Activated CD4-positive, alpha-beta T cell treated with anti-CD3 and anti-CD28 coated beads for 36 hours (primary cell): ENCODE measurements at regions of chr17 and their contacts with region 1.

Region 1: DNA sequence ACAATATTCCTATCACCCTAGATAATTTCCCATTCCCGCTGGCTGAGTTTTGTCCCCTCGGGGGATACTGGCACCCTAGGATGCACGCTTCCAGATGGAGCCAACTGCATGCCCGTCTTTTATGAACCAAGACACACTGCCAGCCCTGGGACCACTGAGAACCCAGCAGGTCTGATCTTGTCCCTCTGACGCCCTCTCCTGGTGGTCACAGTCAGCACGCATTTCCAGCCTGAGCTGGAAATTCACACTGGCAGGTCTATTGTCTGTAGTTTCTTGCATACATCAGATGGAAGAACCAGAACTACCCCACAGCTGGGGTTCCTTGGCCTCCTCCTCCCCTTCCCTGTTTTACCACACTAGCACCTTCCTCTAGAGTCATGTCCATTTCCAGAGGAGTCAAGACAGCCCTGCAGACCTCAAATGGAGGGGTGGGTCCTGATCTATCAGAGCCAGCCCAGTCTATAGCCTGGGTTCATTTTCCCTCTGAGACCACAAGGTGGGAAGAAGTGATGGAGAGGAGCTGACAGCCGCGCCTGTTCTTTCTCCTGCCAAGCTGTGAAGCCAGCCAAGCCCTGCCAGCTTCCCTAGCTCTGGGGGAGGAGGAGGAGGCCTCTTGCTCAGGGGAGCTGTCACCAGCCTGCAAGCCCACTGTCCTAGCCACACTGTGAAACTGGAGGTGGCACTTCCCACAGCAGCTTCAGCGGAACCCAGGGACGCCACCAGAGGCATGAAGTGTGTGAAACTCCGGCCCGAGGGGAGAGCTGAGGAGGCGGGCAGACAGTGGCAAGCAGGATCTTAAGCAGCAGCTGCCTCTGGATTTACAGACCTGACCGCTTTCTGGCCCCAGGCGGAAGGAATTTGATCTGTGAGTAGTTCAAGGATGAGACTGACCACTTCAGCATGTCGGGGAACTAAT is 29.3 kb downstream of the MXRA7 start:
- DNase-seq: peak; percentile 83
- ATAC-seq: peak; percentile 89
- H3K4me3 Mint-ChIP-seq: no peak overlapping the region
- H3K27ac Mint-ChIP-seq: no peak overlapping the region
- H3K4me1 Mint-ChIP-seq: peaks cover 1% of the 10 kb centered on the region
- H3K27me3 Mint-ChIP-seq: no peaks in the 10 kb centered on the region

Region 2: DNA sequence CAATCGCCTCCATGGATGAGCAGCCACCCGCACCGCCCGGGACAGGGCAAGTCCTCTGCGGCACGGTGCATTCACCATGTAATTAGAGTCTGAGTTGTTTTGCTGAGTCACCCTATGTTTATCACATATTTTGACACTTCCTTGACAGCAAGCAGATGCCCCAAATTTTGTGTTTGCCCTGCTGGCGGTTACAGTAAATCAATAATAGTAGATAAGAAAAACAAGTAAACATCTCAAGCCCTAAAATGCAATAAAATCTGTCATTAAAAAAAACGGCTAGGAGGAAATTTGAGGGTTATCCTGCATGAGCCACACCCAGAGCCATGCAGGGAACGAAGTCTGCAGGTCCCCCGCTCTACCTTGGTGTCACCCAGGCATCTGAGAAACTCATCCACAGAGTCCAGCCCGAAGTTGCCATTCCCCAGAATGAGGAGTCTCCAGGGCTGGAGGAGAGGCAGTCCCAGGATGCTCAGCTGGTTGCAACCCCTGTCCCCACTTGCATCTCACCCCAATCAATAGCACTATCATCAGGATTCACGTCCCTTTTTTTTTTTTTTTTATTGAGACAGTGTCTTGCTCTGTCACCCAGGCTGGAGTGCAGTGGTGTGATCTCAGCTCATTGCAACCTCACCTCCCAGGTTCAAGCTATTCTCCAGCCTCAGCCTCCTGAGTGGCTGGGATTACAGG is 21.4 kb before region 1 on chr17:
- CTCF ChIA-PET with region 1: interaction called, 11 read pairs
- POLR2A ChIA-PET with region 1: interaction called, 4 read pairs
- intact Hi-C with region 1: no loop called
- DNase-seq: no peak
- ATAC-seq: peak; percentile 68
- H3K4me3 Mint-ChIP-seq: no peak overlapping the region
- H3K27ac Mint-ChIP-seq: no peak overlapping the region
- H3K4me1 Mint-ChIP-seq: peaks cover 22% of the 10 kb centered on the region
- H3K27me3 Mint-ChIP-seq: peaks cover 2% of the 10 kb centered on the region

Region 3: GRCh38 chr17:76797241-76797840 is 115.9 kb after region 1 on chr17:
- CTCF ChIA-PET with region 1: no interaction called
- POLR2A ChIA-PET with region 1: no interaction called
- intact Hi-C with region 1: no loop called
- DNase-seq: no peak
- ATAC-seq: no peak
- H3K4me3 Mint-ChIP-seq: no peak overlapping the region
- H3K27ac Mint-ChIP-seq: no peak overlapping the region
- H3K4me1 Mint-ChIP-seq: no peaks in the 10 kb centered on the region
- H3K27me3 Mint-ChIP-seq: no peaks in the 10 kb centered on the region